ENCODE measurements at regions of chr6 and their contacts with region 1.

Region 1: DNA sequence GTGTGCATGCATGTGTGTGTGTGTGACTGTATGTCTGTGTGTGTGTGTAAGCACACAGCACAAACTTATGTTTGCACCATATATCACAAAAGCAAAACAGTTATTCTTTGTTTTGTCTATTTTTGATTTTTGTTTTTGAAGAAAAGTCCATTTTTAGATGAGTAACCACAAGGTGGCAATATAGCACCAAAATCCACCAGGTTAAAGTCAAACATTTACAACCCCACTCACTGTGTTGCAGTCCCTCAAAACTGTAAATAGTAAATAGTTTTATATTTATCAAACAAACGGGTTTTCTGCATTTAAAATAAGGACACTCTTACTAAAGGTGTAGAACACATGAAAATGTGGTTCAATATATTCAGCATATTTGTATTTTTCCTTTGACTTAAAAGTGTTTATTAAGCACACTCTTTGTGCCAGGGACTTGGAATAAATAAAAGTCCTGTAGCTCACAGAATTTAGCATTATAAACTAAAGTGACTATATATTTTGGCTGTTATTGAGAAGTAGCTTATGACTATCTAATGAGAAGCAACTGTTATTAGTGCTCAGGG is 118.5 kb downstream of the GFRAL start:
- DNase-seq: peak in 1 of 2 experiments; percentile 11
- H3K4me3 ChIP-seq: no peak overlapping the region
- H3K4me3 Mint-ChIP-seq: no peak overlapping the region
- H3K27ac Mint-ChIP-seq: no peak overlapping the region
- H3K4me1 ChIP-seq: peaks cover 12% of the 10 kb centered on the region
- H3K4me1 Mint-ChIP-seq: peaks cover 10% of the 10 kb centered on the region
- H3K27me3 ChIP-seq: no peaks in the 10 kb centered on the region
- H3K27me3 Mint-ChIP-seq: no peaks in the 10 kb centered on the region
- CTCF ChIP-seq: peak; percentile 38 to 74

Region 2: DNA sequence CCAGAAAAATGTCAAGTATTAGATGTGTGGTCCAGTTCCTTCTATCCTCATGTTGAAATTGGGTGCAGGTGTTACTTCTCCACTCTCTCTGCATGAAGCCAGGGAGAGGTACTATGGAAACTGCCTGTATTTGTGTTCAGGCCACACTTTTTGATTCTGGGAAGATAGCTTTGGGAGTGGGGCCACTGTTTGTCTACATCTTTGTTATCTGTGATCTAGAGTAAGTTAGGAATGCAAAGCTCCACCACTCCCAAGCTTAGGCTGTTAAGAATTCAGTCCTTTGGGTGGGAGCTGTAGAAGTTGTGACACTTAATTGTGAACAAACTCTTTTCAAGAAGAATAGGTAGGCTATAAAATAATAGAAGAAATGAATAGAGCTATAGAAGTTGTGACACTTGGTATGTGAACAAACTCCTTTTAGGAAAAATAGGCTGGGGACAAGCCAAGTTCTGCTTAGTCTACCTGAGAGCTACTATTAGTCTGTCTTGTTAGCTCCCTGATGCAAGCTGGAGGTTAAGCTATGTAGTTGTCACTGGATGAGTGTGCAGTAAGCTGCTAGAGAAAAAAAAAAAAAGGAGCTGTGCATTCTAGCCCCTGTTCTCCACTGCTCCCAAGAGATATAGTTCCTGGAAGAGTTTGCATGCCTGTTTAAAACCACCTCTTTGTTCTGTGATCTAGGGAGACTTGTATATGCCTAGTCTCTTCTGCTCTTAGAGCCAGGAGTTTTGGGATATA is 125.6 kb before region 1 on chr6:
- CTCF ChIA-PET with region 1: no interaction called
- POLR2A ChIA-PET with region 1: no interaction called
- intact Hi-C with region 1: loop called (anchors 1 kb)
- DNase-seq: peak; percentile 75 to 81
- H3K4me3 ChIP-seq: no peak overlapping the region
- H3K4me3 Mint-ChIP-seq: peak overlapping the region; percentile 65
- H3K27ac Mint-ChIP-seq: peak overlapping the region; percentile 100
- H3K4me1 ChIP-seq: peaks cover 28% of the 10 kb centered on the region
- H3K4me1 Mint-ChIP-seq: peaks cover 32% of the 10 kb centered on the region
- H3K27me3 ChIP-seq: no peaks in the 10 kb centered on the region
- H3K27me3 Mint-ChIP-seq: no peaks in the 10 kb centered on the region
- CTCF ChIP-seq: no peak

Region 3: DNA sequence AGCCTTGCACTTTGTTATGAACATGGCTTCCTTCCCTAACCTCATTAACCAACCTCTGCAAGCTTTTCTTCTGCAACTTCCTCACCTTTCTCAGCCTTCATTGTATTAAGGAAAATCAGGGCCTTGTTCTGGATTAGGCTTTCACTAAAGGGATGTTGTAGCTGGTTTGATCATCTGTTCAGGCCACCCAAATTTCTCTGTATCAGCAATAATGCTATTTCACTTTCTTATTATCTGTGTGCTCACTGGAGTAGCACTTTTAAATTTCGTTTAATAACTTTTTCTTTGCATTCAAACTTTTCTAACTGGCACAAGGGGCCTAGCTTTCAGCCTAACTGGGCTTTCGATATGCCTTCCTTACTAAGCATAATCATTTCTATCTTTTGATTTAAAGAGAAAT is 21.8 kb before region 1 on chr6:
- CTCF ChIA-PET with region 1: no interaction called
- POLR2A ChIA-PET with region 1: no interaction called
- intact Hi-C with region 1: no loop called
- DNase-seq: no peak
- H3K4me3 ChIP-seq: no peak overlapping the region
- H3K4me3 Mint-ChIP-seq: no peak overlapping the region
- H3K27ac Mint-ChIP-seq: no peak overlapping the region
- H3K4me1 ChIP-seq: no peaks in the 10 kb centered on the region
- H3K4me1 Mint-ChIP-seq: no peaks in the 10 kb centered on the region
- H3K27me3 ChIP-seq: no peaks in the 10 kb centered on the region
- H3K27me3 Mint-ChIP-seq: no peaks in the 10 kb centered on the region
- CTCF ChIP-seq: no peak

Region 4: DNA sequence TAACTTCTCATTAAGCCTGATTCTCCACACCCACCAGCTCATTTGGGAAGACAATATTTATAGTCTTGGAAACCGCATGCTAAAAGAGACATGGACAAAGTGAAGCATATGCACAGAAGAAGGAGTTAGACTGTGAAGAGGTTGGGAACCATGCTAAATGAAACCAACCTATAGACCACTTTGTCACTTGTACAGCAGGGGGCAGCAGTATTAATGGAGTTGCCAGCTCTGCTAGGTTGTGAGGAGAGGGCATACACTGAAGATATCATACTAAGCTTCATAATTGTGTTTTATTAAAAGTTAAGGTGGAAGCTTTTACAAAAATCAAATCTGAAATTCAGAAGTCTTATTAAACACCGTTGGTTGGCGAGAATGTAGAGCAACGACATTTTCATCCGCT is 171.5 kb after region 1 on chr6:
- CTCF ChIA-PET with region 1: no interaction called
- POLR2A ChIA-PET with region 1: no interaction called
- intact Hi-C with region 1: loop called (anchors 1 kb)
- DNase-seq: peak in 1 of 2 experiments; percentile 50
- H3K4me3 ChIP-seq: no peak overlapping the region
- H3K4me3 Mint-ChIP-seq: no peak overlapping the region
- H3K27ac Mint-ChIP-seq: no peak overlapping the region
- H3K4me1 ChIP-seq: no peaks in the 10 kb centered on the region
- H3K4me1 Mint-ChIP-seq: no peaks in the 10 kb centered on the region
- H3K27me3 ChIP-seq: no peaks in the 10 kb centered on the region
- H3K27me3 Mint-ChIP-seq: no peaks in the 10 kb centered on the region
- CTCF ChIP-seq: peak; percentile 47 to 48

Region 5: DNA sequence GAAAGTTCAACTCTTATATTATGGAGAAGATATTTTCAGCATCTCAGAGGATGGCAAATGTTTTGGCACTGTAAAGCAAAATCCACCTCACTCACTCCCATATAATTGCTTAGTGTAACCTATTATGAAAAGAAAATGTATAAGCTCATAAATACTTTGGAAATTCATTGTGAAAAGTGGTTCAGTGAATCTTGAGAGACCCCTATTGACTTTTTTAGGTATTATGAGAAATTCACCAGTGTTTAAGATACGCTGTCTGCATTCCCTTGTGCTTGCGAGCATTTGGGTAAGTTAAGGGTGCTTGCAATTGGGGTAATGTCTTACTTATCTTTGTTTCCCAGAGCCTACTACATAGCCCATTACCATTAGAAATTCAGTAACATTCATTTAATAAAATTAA is 496.0 kb after region 1 on chr6:
- CTCF ChIA-PET with region 1: interaction called, 4 read pairs
- POLR2A ChIA-PET with region 1: no interaction called
- intact Hi-C with region 1: loop called (anchors 1 kb)
- DNase-seq: no peak
- H3K4me3 ChIP-seq: no peak overlapping the region
- H3K4me3 Mint-ChIP-seq: no peak overlapping the region
- H3K27ac Mint-ChIP-seq: no peak overlapping the region
- H3K4me1 ChIP-seq: no peaks in the 10 kb centered on the region
- H3K4me1 Mint-ChIP-seq: no peaks in the 10 kb centered on the region
- H3K27me3 ChIP-seq: no peaks in the 10 kb centered on the region; the same call in 1 of the 2 replicates
- H3K27me3 Mint-ChIP-seq: no peaks in the 10 kb centered on the region
- CTCF ChIP-seq: no peak

Region 6: DNA sequence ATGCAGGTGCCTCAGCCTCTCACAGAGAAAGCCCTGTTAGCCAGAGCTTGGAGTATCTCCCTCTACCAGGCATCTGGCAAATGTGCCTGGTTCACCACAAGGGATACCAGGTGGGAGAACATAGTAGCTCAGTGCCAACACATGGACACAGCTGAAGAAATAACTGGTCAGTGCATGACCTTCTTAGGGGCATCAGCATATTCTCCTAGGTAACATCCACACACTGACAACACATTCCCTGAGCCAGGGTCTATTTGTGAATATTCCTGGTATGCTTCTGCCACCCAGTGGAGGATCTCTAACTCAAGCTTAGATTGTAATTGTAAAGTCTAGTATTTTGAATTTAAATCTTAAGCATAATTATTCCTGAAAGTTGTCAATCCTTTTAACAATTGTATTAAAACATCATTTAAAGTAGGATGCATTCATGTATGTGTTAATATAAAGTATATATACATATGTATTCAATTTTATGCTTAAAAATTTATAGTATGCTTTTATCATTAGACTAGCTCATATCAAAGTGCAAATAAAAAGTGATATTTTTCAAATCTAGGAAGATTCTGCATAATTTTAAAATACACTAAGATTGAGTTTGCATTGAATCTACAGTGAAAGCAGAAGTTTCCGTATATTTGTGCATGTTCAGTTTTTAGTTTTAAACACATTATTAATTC is 846.9 kb after region 1 on chr6:
- CTCF ChIA-PET with region 1: no interaction called
- POLR2A ChIA-PET with region 1: no interaction called
- intact Hi-C with region 1: loop called (anchors 1 kb)
- DNase-seq: peak; percentile 46 to 56
- H3K4me3 ChIP-seq: no peak overlapping the region
- H3K4me3 Mint-ChIP-seq: no peak overlapping the region
- H3K27ac Mint-ChIP-seq: no peak overlapping the region
- H3K4me1 ChIP-seq: no peaks in the 10 kb centered on the region
- H3K4me1 Mint-ChIP-seq: peaks cover 3% of the 10 kb centered on the region
- H3K27me3 ChIP-seq: no peaks in the 10 kb centered on the region
- H3K27me3 Mint-ChIP-seq: no peaks in the 10 kb centered on the region
- CTCF ChIP-seq: peak; percentile 46 to 57

Measured in Caco-2 (cell line).